Tibial artery (tissue), 4 donors: ENCODE measurements at regions of chr2 and their contacts with region 1.

Region 1: GRCh38 chr2:43343573-43344304 is 117.3 kb upstream of the ZFP36L2 start:
- DNase-seq: peak; percentile 92
- H3K4me3 ChIP-seq: peak overlapping the region in 1 of 2 donors; percentile 3
- H3K27ac ChIP-seq: peak overlapping the region; percentile 76 to 83
- H3K4me1 ChIP-seq: peaks cover 3 to 94% (median 73%) of the 10 kb centered on the region in 4 donors
- H3K27me3 ChIP-seq: no peaks in the 10 kb centered on the region
- CTCF ChIP-seq: no peak

Region 2: DNA sequence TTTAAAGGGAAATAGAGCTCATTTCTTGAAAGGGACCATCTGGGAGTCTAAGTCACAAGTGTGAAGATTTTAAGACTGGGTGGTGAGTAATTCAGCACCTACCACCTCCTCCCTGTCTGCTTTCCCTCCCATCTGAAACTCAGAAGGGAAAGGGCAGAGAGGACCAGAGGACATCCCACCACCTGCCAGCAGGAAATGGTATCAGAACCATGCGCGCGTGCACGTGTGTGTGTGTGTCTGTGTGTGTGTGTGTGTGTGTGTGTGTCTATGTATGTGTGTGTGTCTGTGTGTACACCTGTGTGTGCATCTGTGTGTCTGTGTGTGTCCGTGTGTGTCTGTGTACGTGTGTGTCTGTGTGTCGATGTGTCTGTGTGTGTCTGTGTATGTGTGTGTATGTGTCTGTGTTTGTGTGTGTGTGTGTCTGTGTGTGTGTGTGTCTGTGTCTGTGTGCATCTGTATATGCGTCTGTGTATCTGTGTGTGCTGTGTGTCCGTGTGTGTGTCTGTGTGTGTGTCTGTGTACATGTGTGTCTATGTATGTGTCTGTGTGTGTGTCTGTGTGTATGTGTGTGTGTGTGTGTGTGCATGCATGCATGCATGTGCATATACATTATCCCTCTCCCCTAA is 194.1 kb before region 1 on chr2:
- intact Hi-C with region 1: no loop called
- DNase-seq: no peak
- H3K4me3 ChIP-seq: no peak overlapping the region
- H3K27ac ChIP-seq: no peak overlapping the region
- H3K4me1 ChIP-seq: peaks cover 0 to 4% (median 0%) of the 10 kb centered on the region in 4 donors
- H3K27me3 ChIP-seq: no peaks in the 10 kb centered on the region
- CTCF ChIP-seq: no peak

Region 3: GRCh38 chr2:43399515-43400264 is 56.0 kb after region 1 on chr2:
- intact Hi-C with region 1: loop called (anchors 10 kb)
- DNase-seq: no peak
- H3K4me3 ChIP-seq: no peak overlapping the region
- H3K27ac ChIP-seq: peak overlapping the region; percentile 41 to 54
- H3K4me1 ChIP-seq: peaks cover 0 to 49% (median 28%) of the 10 kb centered on the region in 4 donors
- H3K27me3 ChIP-seq: no peaks in the 10 kb centered on the region
- CTCF ChIP-seq: no peak